HEK293 (cell line): ENCODE measurements at regions of chr9 and their contacts with region 1.

Region 1: GRCh38 chr9:111896353-111896958 is at the start of gene UGCG:
- H3K4me3 ChIP-seq: peak within 1 kb of the TSS; percentile 80
- H3K27ac ChIP-seq: peak within 1 kb of the TSS; percentile 78
- H3K4me1 ChIP-seq: no peaks in the 10 kb centered on the region; the same call in 1 of the 2 replicates
- CTCF ChIP-seq: no peak

Region 2: GRCh38 chr9:111961575-111961974 is 65.1 kb after region 1 on chr9:
- CTCF ChIA-PET with region 1: interaction called, 5 read pairs
- POLR2A ChIA-PET with region 1: interaction called, 21 read pairs
- H3K4me3 ChIP-seq: no peak overlapping the region
- H3K27ac ChIP-seq: peak overlapping the region; percentile 64
- H3K4me1 ChIP-seq: peaks cover 19% of the 10 kb centered on the region
- CTCF ChIP-seq: no peak

Region 3: GRCh38 chr9:112333639-112334431 is 437.4 kb after region 1 on chr9:
- CTCF ChIA-PET with region 1: no interaction called
- POLR2A ChIA-PET with region 1: interaction called, 12 read pairs
- H3K4me3 ChIP-seq: peak overlapping the region; percentile 90
- H3K27ac ChIP-seq: peak overlapping the region; percentile 96
- H3K4me1 ChIP-seq: no peaks in the 10 kb centered on the region
- CTCF ChIP-seq: peak; percentile 29; the same call in 1 of the 2 replicates